ENCODE measurements at regions of chr1 and their contacts with region 1.

Region 1: DNA sequence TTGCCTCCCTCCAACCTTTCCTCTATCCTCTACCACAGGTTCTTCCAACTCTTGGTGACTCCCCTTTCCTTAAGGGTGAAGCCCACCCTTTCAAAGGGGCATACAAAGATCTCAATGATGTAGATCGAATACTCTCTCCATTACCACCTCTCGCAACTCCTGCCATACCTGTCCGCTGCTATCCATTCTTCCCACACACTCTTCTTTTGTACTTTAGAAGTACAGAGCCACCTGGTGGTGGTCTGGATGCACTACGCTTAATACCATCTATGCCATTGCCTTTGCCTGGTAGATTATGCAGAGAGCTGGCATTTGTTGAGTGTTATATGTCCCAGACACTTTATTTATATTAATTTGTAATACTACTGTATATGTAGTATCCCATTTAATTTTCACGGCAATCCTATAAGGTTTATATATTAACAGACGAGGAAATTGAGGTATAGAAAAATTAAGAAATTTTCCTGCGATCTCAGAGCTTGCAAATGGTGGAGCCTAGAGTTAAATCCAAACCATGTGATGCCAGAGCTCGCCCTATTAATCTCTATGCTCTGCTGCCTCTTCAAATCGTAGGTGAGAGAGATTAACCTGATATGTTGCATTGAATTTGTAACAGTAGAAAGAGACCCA is 22.9 kb downstream of the TSHB start:
- DNase-seq: peak; percentile 53
- H3K4me3 ChIP-seq: no peak overlapping the region
- H3K27ac ChIP-seq: no peak overlapping the region
- H3K4me1 ChIP-seq: peaks cover 3% of the 10 kb centered on the region
- H3K27me3 ChIP-seq: no peaks in the 10 kb centered on the region
- CTCF ChIP-seq: peak; percentile 69 to 74
- POLR2A ChIP-seq: no peak

Region 2: GRCh38 chr1:114979278-114979891 is 73.2 kb before region 1 on chr1:
- CTCF ChIA-PET with region 1: interaction called, 9 read pairs
- POLR2A ChIA-PET with region 1: no interaction called
- dilution Hi-C with region 1: no loop called
- intact Hi-C with region 1: loop called (anchors 1 kb)
- DNase-seq: peak; percentile 54
- H3K4me3 ChIP-seq: no peak overlapping the region
- H3K27ac ChIP-seq: no peak overlapping the region
- H3K4me1 ChIP-seq: no peaks in the 10 kb centered on the region
- H3K27me3 ChIP-seq: peaks cover 0 to 14% of the 10 kb centered on the region in 2 experiments
- CTCF ChIP-seq: peak; percentile 50 to 60
- POLR2A ChIP-seq: no peak

Region 3: DNA sequence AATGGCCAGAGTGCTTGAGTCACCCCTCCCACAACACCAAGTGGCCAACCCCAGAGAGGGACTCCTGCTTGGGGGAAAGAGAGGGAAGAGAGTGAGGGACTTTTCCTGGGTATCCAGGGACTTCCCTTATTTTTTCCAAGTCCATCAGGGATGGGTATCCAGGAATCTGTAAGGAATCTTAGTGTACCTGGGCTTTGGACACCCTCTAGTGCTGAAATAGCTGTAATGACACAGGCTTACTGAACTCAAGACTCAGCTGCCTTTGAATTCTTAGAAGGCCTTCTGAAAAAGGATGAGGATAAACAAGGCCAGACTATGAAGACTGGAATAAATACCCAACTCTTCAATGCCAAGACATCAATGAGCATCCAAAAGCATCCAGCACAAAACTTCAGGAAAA is 10.9 kb before region 1 on chr1:
- CTCF ChIA-PET with region 1: interaction called, 19 read pairs
- POLR2A ChIA-PET with region 1: no interaction called
- dilution Hi-C with region 1: no loop called
- intact Hi-C with region 1: no loop called
- DNase-seq: no peak
- H3K4me3 ChIP-seq: no peak overlapping the region
- H3K27ac ChIP-seq: no peak overlapping the region
- H3K4me1 ChIP-seq: no peaks in the 10 kb centered on the region
- H3K27me3 ChIP-seq: peaks cover 4 to 6% of the 10 kb centered on the region in 2 experiments
- CTCF ChIP-seq: peak in 1 of 2 donors; percentile 3
- POLR2A ChIP-seq: no peak

Region 4: DNA sequence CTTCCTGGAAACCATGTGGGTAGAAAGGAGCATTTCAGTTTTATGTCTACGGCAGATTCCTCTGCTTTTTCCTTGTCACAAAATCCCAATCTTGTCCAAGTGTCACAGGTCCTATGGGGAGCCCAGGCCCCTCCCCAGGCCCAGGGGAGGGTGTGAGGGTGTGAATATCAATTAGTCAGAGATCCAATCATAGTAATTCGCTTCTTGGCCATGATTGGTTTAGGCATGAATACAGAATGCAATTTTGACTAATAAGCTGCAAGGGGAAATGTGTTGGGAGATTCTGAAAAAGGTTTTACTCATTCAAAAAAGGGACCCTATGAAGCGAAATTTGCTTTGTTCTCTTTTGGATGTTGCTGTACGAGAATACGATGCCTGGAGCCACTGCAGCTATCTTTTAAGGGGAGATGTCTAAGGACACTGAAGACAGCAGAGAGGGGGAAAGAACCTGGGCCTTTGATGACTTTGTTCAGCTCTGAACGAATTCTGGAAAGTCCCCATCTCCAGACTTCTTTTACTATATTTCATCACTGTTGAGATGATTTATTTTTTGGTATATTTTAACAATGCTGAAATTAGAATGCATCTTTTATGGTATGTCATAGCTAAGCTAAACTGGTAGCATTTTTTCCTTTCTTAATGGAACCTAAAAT is 18.6 kb after region 1 on chr1:
- CTCF ChIA-PET with region 1: interaction called, 12 read pairs
- POLR2A ChIA-PET with region 1: no interaction called
- dilution Hi-C with region 1: no loop called
- intact Hi-C with region 1: no loop called
- DNase-seq: no peak
- H3K4me3 ChIP-seq: no peak overlapping the region
- H3K27ac ChIP-seq: no peak overlapping the region
- H3K4me1 ChIP-seq: no peaks in the 10 kb centered on the region
- H3K27me3 ChIP-seq: peaks cover 3 to 5% of the 10 kb centered on the region in 2 experiments
- CTCF ChIP-seq: no peak
- POLR2A ChIP-seq: no peak

Region 5: DNA sequence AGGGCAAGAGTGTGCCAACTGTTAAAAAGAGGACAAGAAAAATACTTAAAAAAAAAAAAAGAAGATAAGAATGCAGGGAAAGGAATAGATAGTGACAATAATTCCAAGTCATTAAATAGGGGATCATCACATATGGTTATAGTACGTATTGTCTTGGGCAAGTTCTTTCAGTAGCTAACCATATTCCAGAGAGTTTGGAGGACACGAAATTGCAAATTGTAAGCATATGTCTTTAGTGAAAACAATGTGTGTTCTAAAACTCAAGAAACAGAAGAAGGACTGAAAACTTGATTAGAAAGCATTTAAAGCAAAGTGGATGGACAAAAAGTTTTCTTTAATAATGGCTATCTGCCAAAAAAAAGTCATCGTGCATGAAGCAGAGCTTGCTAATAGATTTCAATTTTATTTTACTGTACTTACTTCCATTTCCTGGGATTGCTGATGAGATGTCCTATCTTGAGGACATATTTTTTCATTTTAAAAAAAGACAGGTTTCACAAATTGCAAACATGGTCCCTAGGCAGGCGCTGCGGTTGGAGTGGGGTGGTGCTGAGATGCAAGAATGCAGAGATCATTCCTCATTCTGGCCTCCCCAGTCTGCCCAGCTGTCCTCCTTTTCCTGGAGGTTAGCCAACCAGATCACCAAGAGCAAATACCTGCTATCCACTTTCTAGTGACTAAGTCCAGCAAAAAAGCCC is 24.9 kb after region 1 on chr1:
- CTCF ChIA-PET with region 1: interaction called, 10 read pairs
- POLR2A ChIA-PET with region 1: no interaction called
- dilution Hi-C with region 1: no loop called
- intact Hi-C with region 1: no loop called
- DNase-seq: no peak
- H3K4me3 ChIP-seq: no peak overlapping the region
- H3K27ac ChIP-seq: no peak overlapping the region
- H3K4me1 ChIP-seq: no peaks in the 10 kb centered on the region
- H3K27me3 ChIP-seq: peaks cover 7 to 8% of the 10 kb centered on the region in 2 experiments
- CTCF ChIP-seq: no peak
- POLR2A ChIP-seq: no peak

Region 6: GRCh38 chr1:115112496-115113375 is 60.2 kb after region 1 on chr1:
- CTCF ChIA-PET with region 1: interaction called, 23 read pairs
- POLR2A ChIA-PET with region 1: no interaction called
- dilution Hi-C with region 1: no loop called
- intact Hi-C with region 1: no loop called
- DNase-seq: peak; percentile 25
- H3K4me3 ChIP-seq: no peak overlapping the region
- H3K27ac ChIP-seq: no peak overlapping the region
- H3K4me1 ChIP-seq: no peaks in the 10 kb centered on the region
- H3K27me3 ChIP-seq: no peaks in the 10 kb centered on the region
- CTCF ChIP-seq: peak; percentile 86 to 88
- POLR2A ChIP-seq: no peak

Measured in endothelial cell of umbilical vein (primary cell).